ENCODE measurements at regions of chr9 and their contacts with region 1.

Region 1: GRCh38 chr9:128635283-128636023 is 21.2 kb downstream of the DYNC2I2 start:
- DNase-seq: no peak
- H3K4me3 ChIP-seq: no peak overlapping the region
- H3K27ac ChIP-seq: peak overlapping the region; percentile 87
- H3K4me1 ChIP-seq: peaks cover 27% of the 10 kb centered on the region
- H3K27me3 ChIP-seq: no peaks in the 10 kb centered on the region
- CTCF ChIP-seq: peak; percentile 0 to 62 (median 44)
- POLR2A ChIP-seq: no peak

Region 2: DNA sequence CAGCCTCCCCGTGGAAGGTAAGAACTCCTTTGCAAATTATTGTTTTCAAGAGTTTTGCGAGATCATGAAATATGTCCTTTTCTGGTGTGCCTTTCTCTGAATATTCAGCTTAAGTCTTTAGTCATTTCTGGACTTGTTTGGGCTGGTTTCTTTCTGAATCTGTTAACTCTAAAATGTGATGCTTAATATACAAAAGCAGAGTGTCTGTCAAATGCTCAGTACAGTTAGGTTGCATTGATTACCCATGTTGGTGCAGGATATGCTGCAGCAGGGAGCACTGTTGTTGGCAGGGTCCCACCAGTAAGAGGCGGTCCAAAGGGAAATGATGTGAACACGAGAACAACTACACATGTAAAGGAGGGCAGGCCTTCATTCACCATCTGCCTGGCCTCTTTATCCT is 35.4 kb before region 1 on chr9:
- intact Hi-C with region 1: no loop called
- DNase-seq: no peak
- H3K4me3 ChIP-seq: no peak overlapping the region
- H3K27ac ChIP-seq: no peak overlapping the region
- H3K4me1 ChIP-seq: no peaks in the 10 kb centered on the region
- H3K27me3 ChIP-seq: no peaks in the 10 kb centered on the region
- CTCF ChIP-seq: no peak
- POLR2A ChIP-seq: no peak

Region 3: DNA sequence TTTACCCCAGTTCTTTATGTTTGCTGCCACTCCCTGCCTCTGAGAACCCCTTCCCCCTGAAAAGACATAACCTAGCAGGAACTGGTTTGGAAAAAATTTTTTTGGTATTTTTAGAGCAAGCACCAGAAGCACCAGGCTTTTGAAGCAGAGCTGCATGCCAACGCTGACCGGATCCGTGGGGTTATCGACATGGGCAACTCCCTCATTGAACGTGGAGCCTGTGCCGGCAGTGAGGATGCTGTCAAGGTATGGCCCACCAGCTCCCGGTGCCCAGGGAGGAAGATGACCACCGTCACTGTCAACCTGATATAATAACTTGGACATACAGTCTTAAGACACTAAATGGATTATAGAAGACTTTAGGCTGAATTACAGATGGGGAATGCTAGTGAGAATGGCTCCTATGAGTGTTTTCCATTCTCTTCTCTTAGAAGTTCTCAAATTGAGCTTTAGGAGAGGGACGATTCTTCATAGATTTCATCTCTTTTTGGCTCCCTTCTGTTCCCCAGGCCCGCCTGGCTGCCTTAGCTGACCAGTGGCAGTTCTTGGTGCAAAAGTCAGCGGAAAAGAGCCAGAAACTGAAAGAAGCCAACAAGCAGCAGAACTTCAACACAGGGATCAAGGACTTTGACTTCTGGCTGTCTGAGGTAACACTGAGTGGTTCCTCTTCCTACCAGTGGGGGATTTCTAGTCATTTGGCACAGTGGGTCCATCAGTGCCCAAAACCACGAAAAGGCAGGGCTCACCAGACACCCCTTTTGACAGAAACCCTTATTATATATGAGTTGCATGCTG is 23.7 kb before region 1 on chr9:
- intact Hi-C with region 1: loop called (anchors 1 kb)
- DNase-seq: no peak
- H3K4me3 ChIP-seq: no peak overlapping the region
- H3K27ac ChIP-seq: no peak overlapping the region
- H3K4me1 ChIP-seq: no peaks in the 10 kb centered on the region
- H3K27me3 ChIP-seq: no peaks in the 10 kb centered on the region
- CTCF ChIP-seq: no peak
- POLR2A ChIP-seq: no peak

Region 4: DNA sequence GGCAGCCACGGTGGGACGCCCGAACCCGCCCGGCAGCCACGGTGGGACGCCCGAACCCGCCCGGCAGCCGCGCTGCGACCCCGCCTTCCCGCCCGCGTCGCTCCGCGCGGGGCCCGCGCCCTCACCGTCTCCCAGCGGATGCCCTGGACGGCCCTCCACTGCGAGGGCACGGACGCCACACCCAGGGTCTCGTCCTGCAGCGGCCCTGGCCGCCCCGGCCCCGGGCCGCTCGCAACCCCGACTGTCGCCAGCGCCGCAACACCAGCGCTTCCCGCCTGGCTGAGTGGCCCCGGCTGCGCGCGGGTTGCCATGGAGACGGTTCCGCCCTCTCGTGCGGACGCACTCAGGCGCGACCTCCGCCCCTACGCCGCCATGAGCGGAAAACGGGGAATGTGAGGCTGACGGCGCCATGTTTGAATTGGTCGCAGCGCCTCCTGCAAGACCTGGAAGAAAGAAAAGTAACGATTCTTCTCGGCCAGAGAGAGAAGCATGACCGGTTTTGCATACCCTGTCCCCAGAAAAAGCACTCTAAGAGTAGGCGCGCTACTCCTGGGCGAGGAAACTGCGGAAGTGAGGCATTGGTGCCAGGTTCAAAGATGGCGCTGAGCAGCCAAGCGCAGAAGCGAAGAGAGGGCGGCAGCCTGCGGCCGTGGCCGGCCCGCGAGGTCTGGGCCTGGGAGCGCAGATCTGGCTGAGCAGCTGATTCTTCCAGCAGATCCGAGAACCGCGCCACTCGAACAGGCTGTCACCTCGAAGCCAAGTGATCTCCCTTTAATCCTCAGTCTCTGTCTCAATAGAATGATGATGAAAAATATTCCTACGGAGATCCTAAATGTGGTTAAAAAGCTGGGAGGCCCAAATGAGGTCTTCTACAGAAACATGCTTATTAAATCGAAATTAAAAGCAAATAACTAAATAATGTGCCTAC is 21.2 kb after region 1 on chr9 and contains the start of gene DYNC2I2:
- intact Hi-C with region 1: loop called (anchors 1 kb)
- DNase-seq: no peak
- H3K4me3 ChIP-seq: peak within 1 kb of the TSS; percentile 72 to 95
- H3K27ac ChIP-seq: peak within 1 kb of the TSS; percentile 98
- H3K4me1 ChIP-seq: peaks cover 8% of the 10 kb centered on the region
- H3K27me3 ChIP-seq: no peaks in the 10 kb centered on the region
- CTCF ChIP-seq: no peak
- POLR2A ChIP-seq: peak in 1 of 2 donors; percentile 43
- total RNA-seq, gene DYNC2I2: 46.9 TPM

Region 5: GRCh38 chr9:128688512-128689292 is 53.2 kb after region 1 on chr9 and contains the start of gene SET:
- intact Hi-C with region 1: loop called (anchors 10 kb)
- DNase-seq: no peak
- H3K4me3 ChIP-seq: peak within 1 kb of the TSS; percentile 79 to 97
- H3K27ac ChIP-seq: peak within 1 kb of the TSS; percentile 97
- H3K4me1 ChIP-seq: peaks cover 42% of the 10 kb centered on the region
- H3K27me3 ChIP-seq: no peaks in the 10 kb centered on the region
- CTCF ChIP-seq: no peak
- POLR2A ChIP-seq: peak; percentile 54 to 99
- total RNA-seq, gene SET: 137 TPM